Right ventricle myocardium superior (tissue), 1 donor: ENCODE measurements at regions of chr2 and their contacts with region 1.

Region 1: DNA sequence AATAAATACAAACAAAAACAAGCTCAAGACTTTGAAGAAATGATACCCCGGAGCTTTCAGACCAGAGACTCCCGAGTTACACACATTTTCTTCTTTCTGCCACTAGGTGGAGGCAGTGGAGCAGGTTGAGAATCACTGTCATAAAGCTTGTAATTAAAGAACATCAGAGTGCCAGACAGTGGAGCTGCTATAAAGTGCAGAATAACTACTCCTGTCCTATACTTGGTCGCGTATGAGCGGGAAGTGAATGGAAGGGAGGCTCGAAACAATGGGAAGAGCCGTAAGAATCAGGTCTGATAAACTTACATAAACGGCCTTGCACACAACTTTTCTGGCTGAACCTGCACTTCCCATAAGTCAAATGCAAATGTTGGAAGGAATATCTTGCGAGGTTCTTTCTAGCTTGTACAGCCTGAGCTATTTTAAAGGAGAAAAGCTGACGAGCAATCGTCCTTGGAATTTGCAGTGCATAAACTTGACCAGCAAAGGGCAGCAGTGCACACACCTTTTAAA is 189.0 kb downstream of the RPIA start:
- DNase-seq: no peak
- ATAC-seq: peak; percentile 89

Region 2: GRCh38 chr2:88545121-88545520 is 335.4 kb before region 1 on chr2:
- intact Hi-C with region 1: no loop called
- DNase-seq: no peak
- ATAC-seq: no peak

Region 3: DNA sequence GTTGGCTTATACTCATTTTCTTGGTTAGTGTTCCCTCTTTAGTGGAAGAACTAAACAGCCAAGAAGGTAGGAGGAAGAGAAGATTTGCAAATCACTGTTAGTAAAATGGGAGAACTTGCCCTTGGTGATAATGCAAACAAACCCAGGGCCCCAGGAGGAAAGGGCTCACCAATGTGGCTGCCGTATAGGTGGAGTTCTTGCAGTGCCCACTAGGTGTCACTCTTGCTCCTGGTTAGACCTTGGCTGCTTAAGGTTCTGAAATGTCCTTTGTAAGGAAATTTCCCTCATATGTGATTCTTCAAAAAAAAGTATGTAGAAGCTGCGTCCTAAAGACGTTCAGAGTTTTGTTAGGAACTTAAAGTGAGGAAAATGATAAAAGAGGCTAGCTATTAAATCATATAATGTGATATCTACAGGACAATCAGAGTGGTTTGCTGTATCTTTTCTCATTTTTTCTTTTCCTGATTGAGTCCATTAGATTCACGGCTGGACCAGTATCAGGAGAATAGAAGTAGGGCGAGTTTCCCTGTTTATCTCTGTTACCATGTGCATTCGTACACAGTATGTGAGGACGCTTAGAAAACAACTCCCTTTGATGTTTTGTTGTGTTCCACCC is 140.4 kb before region 1 on chr2:
- intact Hi-C with region 1: loop called (anchors 10 kb)
- DNase-seq: peak; percentile 69
- ATAC-seq: peak; percentile 78

Region 4: DNA sequence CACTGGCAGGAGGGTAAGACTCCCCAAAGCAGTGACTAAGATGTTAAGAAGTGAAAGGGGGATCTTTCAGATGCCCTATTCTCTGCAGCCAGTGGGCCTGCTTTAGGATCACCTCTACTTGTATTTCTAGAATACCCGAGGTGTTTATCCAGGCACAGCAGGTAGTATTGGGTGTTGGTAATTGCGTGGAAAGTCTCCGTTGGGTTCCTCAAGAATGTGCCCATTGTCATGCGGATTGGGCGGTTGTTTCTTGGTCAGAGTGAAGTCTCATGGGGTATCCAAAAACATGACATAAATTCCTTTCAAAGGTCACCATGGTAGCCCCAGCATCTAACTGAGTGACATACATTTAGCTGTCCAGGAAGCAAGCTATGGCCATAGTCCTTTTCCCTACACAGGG is 119.7 kb after region 1 on chr2:
- intact Hi-C with region 1: no loop called
- DNase-seq: no peak
- ATAC-seq: no peak